B cell (primary cell): ENCODE measurements at regions of chr11 and their contacts with region 1.

Region 1: GRCh38 chr11:124673333-124674167 is at the starts of genes SIAE and SPA17:
- DNase-seq: peak; percentile 96
- ATAC-seq: peak; percentile 93
- H3K4me3 ChIP-seq: peak within 1 kb of the TSS; percentile 46 to 93 (median 75)
- H3K4me3 Mint-ChIP-seq: peak within 1 kb of the TSS; percentile 94
- H3K27ac ChIP-seq: peak within 1 kb of the TSS; percentile 73 to 90
- H3K27ac Mint-ChIP-seq: peak within 1 kb of the TSS; percentile 96
- H3K4me1 ChIP-seq: peaks cover 23 to 32% of the 10 kb centered on the region in 2 donors
- H3K4me1 Mint-ChIP-seq: peaks cover 25% of the 10 kb centered on the region
- H3K27me3 ChIP-seq: no peaks in the 10 kb centered on the region
- H3K27me3 Mint-ChIP-seq: no peaks in the 10 kb centered on the region
- CTCF ChIP-seq: no peak
- total RNA-seq, gene SIAE: 3.6 and 5.1 TPM in 2 replicates
- total RNA-seq, gene SPA17: 0.46 and 0.76 TPM in 2 replicates

Region 2: GRCh38 chr11:123797114-123797513 is 876.4 kb before region 1 on chr11:
- CTCF ChIA-PET with region 1: no interaction called
- POLR2A ChIA-PET with region 1: no interaction called
- intact Hi-C with region 1: no loop called
- DNase-seq: no peak
- ATAC-seq: no peak
- H3K4me3 ChIP-seq: no peak overlapping the region
- H3K4me3 Mint-ChIP-seq: no peak overlapping the region
- H3K27ac ChIP-seq: no peak overlapping the region
- H3K27ac Mint-ChIP-seq: no peak overlapping the region
- H3K4me1 ChIP-seq: no peaks in the 10 kb centered on the region
- H3K4me1 Mint-ChIP-seq: no peaks in the 10 kb centered on the region
- H3K27me3 ChIP-seq: no peaks in the 10 kb centered on the region
- H3K27me3 Mint-ChIP-seq: peaks cover 7% of the 10 kb centered on the region
- CTCF ChIP-seq: no peak

Region 3: DNA sequence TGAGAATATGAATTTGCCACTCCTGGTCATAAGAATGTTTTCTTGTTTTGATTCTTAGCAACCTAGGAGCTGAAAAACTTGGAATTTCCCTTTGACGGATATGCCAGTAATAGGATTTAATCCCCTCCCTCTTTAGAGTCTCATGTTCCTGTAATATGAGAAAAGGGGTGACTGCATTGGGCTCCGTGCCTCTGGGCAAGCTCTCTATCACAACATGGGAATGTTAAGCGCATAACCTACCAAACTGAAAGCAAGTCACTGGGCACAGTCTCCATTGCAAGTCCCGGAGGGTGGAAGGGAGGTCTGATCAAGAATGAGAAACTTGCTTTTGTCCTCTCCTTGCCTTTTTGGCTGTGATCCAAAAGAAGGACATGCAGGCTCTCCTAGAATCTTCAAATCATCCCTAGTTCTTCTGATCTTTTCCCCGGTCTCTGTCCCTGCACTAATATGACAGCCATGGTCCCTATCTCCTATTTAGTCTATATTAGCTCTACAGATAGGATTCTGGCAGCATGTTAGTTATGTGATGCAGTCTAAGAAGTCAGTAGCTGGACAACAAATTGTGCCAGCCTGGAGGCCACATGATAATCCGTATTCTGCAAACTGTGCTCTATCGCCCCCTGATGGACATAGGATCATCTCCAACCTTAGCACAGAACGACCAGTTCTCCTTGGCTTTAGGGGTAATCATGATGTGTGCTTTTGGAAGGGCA is 478.7 kb before region 1 on chr11:
- CTCF ChIA-PET with region 1: no interaction called
- POLR2A ChIA-PET with region 1: no interaction called
- intact Hi-C with region 1: no loop called
- DNase-seq: peak; percentile 51
- ATAC-seq: no peak
- H3K4me3 ChIP-seq: no peak overlapping the region
- H3K4me3 Mint-ChIP-seq: no peak overlapping the region
- H3K27ac ChIP-seq: no peak overlapping the region
- H3K27ac Mint-ChIP-seq: no peak overlapping the region
- H3K4me1 ChIP-seq: peaks cover 0 to 3% of the 10 kb centered on the region in 2 donors
- H3K4me1 Mint-ChIP-seq: peaks cover 6% of the 10 kb centered on the region
- H3K27me3 ChIP-seq: no peaks in the 10 kb centered on the region
- H3K27me3 Mint-ChIP-seq: peaks cover 3% of the 10 kb centered on the region
- CTCF ChIP-seq: peak; percentile 55

Region 4: DNA sequence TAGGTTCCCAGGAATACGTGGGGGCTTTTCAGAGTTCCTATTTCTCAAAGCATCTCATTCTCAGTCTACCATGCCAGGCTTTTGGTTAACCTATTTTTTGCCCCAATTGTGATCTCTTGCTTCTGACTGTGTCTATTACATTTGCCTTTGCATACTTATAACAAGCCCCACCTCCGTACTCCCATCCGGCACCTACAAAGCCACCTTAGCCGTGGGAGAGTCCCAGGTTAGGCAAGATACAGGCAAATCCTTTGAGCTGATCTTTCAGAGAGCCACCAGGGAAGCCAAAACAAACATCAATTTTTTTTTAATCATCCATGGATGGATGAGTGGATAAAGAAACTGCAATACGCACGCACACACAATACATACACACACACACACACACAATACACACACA is 80.9 kb before region 1 on chr11:
- CTCF ChIA-PET with region 1: no interaction called
- POLR2A ChIA-PET with region 1: no interaction called
- intact Hi-C with region 1: no loop called
- DNase-seq: no peak
- ATAC-seq: no peak
- H3K4me3 ChIP-seq: no peak overlapping the region
- H3K4me3 Mint-ChIP-seq: no peak overlapping the region
- H3K27ac ChIP-seq: no peak overlapping the region
- H3K27ac Mint-ChIP-seq: no peak overlapping the region
- H3K4me1 ChIP-seq: no peaks in the 10 kb centered on the region
- H3K4me1 Mint-ChIP-seq: no peaks in the 10 kb centered on the region
- H3K27me3 ChIP-seq: peaks cover 0 to 5% (median 3%) of the 10 kb centered on the region in 4 experiments
- H3K27me3 Mint-ChIP-seq: peaks cover 23% of the 10 kb centered on the region
- CTCF ChIP-seq: no peak

Region 5: DNA sequence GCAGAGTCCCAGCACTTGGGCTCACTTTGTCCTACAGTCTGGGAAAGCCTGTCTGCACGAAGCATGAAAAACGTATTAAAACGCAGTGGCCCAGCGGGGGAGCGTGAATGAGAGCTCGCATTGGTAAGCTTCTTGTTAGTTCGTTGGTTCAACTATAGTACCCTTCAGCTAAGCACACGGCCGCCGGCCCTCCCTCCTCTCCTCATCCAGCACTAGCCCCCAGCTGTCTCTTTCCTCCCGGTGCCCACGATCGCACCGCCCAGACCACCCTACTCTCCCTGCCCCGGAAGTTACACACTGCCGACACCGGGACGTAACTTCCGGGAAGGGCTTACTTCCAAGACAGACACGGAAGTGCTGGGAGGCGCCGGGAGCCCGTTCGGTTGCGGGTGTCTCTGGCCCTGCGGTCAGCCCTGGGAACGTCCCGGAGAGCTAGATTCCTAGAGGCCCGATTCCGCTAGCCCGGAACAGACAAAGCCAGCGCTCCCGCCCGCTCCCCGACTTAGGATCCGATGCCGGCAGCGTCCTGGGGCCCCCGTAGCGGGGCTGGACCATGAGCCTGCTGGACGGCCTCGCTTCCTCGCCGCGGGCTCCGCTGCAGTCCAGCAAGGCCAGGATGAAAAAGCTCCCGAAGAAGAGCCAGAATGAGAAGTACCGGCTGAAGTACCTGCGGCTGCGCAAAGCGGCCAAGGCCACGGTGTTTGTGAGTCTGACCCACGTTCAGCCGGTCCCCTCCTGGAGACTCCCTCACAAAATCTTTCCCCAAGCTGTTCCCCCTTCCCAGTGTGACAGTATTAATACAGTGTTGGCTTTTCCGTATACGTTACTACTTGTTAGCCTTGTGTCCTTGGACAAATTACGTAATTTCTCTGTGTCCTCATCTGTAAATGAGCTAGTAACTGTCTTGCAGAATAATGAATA is 50.8 kb before region 1 on chr11 and contains the start of gene TBRG1:
- CTCF ChIA-PET with region 1: interaction called, 10 read pairs
- POLR2A ChIA-PET with region 1: no interaction called
- intact Hi-C with region 1: loop called (anchors 1 kb)
- DNase-seq: peak; percentile 89
- ATAC-seq: peak; percentile 97
- H3K4me3 ChIP-seq: peak within 1 kb of the TSS; percentile 75 to 98 (median 91)
- H3K4me3 Mint-ChIP-seq: peak within 1 kb of the TSS; percentile 99
- H3K27ac ChIP-seq: peak within 1 kb of the TSS; percentile 71 to 95
- H3K27ac Mint-ChIP-seq: peak within 1 kb of the TSS; percentile 97
- H3K4me1 ChIP-seq: peaks cover 15 to 17% of the 10 kb centered on the region in 2 donors
- H3K4me1 Mint-ChIP-seq: peaks cover 31% of the 10 kb centered on the region
- H3K27me3 ChIP-seq: peaks cover 0 to 13% (median 3%) of the 10 kb centered on the region in 4 experiments
- H3K27me3 Mint-ChIP-seq: peaks cover 24% of the 10 kb centered on the region
- CTCF ChIP-seq: no peak
- total RNA-seq, gene TBRG1: 66.8 and 71.5 TPM in 2 replicates

Region 6: GRCh38 chr11:124658986-124659385 is 14.6 kb before region 1 on chr11:
- CTCF ChIA-PET with region 1: interaction called, 11 read pairs
- POLR2A ChIA-PET with region 1: no interaction called
- intact Hi-C with region 1: no loop called
- DNase-seq: no peak
- ATAC-seq: no peak
- H3K4me3 ChIP-seq: no peak overlapping the region
- H3K4me3 Mint-ChIP-seq: no peak overlapping the region
- H3K27ac ChIP-seq: no peak overlapping the region
- H3K27ac Mint-ChIP-seq: no peak overlapping the region
- H3K4me1 ChIP-seq: no peaks in the 10 kb centered on the region
- H3K4me1 Mint-ChIP-seq: no peaks in the 10 kb centered on the region
- H3K27me3 ChIP-seq: no peaks in the 10 kb centered on the region
- H3K27me3 Mint-ChIP-seq: no peaks in the 10 kb centered on the region
- CTCF ChIP-seq: no peak

Region 7: DNA sequence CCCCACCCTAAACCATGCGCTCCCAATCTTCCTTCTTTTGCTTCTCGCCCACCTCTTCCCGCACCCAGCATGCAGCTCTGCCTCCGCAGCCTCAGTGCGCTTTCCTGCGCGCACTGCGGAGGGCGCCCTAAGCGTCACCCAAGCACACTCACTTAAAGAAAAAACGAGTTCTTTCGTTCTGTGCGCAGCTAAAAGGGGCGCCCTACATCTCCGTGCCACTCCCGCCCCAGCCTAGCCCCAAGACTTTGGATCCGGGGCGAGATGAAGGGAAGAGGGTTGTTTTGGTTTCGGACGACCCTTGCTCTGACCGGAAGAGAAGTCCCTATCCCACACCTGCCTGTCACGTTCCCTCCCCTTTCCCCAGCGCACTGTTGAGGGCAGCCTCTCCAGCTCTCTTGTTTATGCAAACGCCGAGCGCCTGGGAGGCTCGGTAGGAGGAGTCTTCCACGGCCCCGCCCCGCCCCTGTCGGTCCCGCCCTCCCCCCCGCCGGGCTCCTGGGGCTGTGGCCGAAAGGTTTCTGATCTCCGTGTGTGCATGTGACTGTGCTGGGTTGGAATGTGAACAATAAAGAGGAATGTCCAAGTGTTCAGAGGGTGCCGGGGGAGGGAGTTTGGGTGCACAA is 73.2 kb after region 1 on chr11:
- CTCF ChIA-PET with region 1: interaction called, 11 read pairs
- POLR2A ChIA-PET with region 1: interaction called, 6 read pairs
- intact Hi-C with region 1: loop called (anchors 1 kb)
- DNase-seq: peak; percentile 90
- ATAC-seq: peak; percentile 90
- H3K4me3 ChIP-seq: peak overlapping the region; percentile 62 to 97 (median 83)
- H3K4me3 Mint-ChIP-seq: peak overlapping the region; percentile 99
- H3K27ac ChIP-seq: peak overlapping the region; percentile 43 to 59
- H3K27ac Mint-ChIP-seq: peak overlapping the region; percentile 97
- H3K4me1 ChIP-seq: peaks cover 24 to 42% of the 10 kb centered on the region in 2 donors
- H3K4me1 Mint-ChIP-seq: peaks cover 35% of the 10 kb centered on the region
- H3K27me3 ChIP-seq: peaks cover 0 to 3% (median 0%) of the 10 kb centered on the region in 4 experiments
- H3K27me3 Mint-ChIP-seq: no peaks in the 10 kb centered on the region
- CTCF ChIP-seq: peak; percentile 67

Region 8: DNA sequence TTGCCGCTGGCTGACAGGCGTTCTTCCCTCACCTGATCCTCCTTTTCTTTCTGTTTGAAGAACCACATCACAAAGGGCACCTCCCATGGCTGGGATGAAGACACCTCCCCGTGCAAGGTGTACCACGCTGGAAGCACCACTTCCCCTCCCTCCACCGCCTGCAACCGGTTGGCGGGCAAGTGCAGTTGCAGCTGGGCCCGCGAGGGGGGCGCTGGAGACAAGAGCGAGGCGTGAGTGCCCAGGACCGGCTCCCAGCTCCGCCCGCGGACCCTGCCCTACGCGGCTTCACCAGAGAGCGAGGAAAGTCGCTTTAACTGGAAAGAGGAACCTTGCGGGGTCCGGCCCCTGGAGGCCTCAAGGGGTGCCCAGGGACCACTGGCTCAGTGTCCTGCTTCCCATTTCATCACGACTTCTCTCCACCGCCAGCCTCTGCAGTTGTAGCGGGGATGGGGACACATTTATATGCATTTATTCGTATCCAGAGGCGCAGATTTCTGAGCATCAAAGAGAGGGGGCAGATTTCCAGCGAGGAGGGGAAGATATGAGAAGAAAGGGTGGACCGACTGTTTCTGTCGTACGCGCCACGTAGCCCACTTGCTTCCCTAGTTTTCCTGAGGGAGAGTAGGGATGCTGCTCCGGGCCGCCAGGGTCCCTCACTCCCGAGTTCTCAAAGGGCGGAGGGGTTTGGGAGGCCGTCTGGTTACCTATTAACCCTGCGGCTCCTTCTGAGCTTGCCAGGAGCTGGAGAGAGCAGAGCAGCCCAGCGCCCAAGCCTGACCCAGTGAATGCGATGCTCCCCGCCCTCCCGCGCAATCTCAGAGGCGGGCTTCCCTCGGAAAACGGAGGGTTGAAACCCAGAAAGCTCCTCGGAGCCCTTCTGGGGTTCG is 85.0 kb after region 1 on chr11:
- CTCF ChIA-PET with region 1: interaction called, 202 read pairs
- POLR2A ChIA-PET with region 1: interaction called, 4 read pairs
- intact Hi-C with region 1: loop called (anchors 1 kb)
- DNase-seq: peak; percentile 83
- ATAC-seq: peak; percentile 67
- H3K4me3 ChIP-seq: peak overlapping the region in 4 of 5 experiments; percentile 27 to 81 (median 43)
- H3K4me3 Mint-ChIP-seq: peak overlapping the region; percentile 81
- H3K27ac ChIP-seq: peak overlapping the region in 1 of 2 donors; percentile 22
- H3K27ac Mint-ChIP-seq: no peak overlapping the region
- H3K4me1 ChIP-seq: peaks cover 38 to 53% of the 10 kb centered on the region in 2 donors
- H3K4me1 Mint-ChIP-seq: peaks cover 39% of the 10 kb centered on the region
- H3K27me3 ChIP-seq: peaks cover 0 to 22% (median 10%) of the 10 kb centered on the region in 4 experiments
- H3K27me3 Mint-ChIP-seq: peaks cover 11% of the 10 kb centered on the region
- CTCF ChIP-seq: peak; percentile 84

Region 9: DNA sequence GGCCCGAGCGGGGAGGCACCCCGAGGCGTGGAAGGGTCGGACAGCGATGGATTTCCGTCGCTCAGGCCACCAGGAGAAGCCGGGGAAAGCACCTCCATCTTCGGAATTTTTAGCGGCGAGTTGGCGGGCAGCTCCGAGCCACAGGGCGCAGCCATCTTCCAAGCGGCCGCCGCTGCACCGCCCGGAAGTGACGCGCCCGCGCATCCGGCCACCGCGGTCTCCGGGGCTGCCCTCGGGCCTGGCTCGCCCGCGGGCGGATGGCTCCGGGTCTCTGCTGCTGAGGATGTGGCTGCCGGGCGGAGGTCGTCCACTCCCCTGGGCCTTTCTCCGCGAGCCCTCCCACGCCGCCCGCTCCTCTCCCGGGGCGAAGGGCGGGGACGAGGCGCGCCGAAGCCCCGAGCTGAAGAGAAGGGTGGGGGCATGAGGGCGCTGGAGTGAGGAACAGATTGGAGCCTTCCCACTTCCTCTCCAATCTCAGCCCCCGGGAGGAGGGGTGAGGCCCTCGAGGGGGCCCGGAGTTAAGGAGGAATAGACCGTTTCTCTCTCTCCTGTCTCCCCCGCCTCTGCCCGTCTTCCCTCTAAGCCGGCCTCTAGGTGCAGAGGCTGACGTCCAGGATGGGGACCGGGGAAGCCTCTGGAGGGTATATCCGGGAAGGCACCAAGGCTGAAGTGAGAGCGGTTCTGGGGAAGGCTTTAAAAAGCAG is 126.8 kb after region 1 on chr11 and contains the start of gene MSANTD2:
- CTCF ChIA-PET with region 1: interaction called, 177 read pairs
- POLR2A ChIA-PET with region 1: interaction called, 8 read pairs
- intact Hi-C with region 1: loop called (anchors 1 kb)
- DNase-seq: peak; percentile 89
- ATAC-seq: peak; percentile 84
- H3K4me3 ChIP-seq: peak within 1 kb of the TSS; percentile 57 to 95 (median 91)
- H3K4me3 Mint-ChIP-seq: peak within 1 kb of the TSS; percentile 94
- H3K27ac ChIP-seq: peak within 1 kb of the TSS; percentile 96 to 99
- H3K27ac Mint-ChIP-seq: peak within 1 kb of the TSS; percentile 93
- H3K4me1 ChIP-seq: peaks cover 15 to 17% of the 10 kb centered on the region in 2 donors
- H3K4me1 Mint-ChIP-seq: peaks cover 22% of the 10 kb centered on the region
- H3K27me3 ChIP-seq: no peaks in the 10 kb centered on the region
- H3K27me3 Mint-ChIP-seq: no peaks in the 10 kb centered on the region
- CTCF ChIP-seq: peak; percentile 2
- total RNA-seq, gene MSANTD2: 26.8 and 33.4 TPM in 2 replicates

Region 10: DNA sequence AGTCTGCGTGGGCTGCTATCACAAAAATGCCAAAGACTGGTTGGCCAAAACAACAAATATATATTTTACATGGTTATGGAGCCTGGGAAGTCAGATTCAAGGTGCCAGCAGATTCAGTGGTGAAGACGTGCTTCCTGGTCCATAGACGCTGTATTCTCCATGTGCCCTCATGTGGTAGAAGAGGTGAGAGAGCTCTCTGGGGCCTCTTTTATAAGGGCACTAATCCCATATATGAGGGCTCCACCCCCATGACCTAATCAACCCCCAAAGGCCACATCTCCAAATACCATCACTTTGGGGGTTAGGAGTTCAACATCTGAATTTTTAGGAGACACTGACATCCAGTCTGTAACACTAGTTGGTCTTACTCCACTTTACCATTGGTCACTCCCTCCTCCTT is 181.9 kb after region 1 on chr11:
- CTCF ChIA-PET with region 1: no interaction called
- POLR2A ChIA-PET with region 1: no interaction called
- intact Hi-C with region 1: no loop called
- DNase-seq: no peak
- ATAC-seq: no peak
- H3K4me3 ChIP-seq: no peak overlapping the region
- H3K4me3 Mint-ChIP-seq: no peak overlapping the region
- H3K27ac ChIP-seq: no peak overlapping the region
- H3K27ac Mint-ChIP-seq: no peak overlapping the region
- H3K4me1 ChIP-seq: no peaks in the 10 kb centered on the region
- H3K4me1 Mint-ChIP-seq: no peaks in the 10 kb centered on the region
- H3K27me3 ChIP-seq: peaks cover 0 to 21% (median 15%) of the 10 kb centered on the region in 4 experiments
- H3K27me3 Mint-ChIP-seq: peaks cover 18% of the 10 kb centered on the region
- CTCF ChIP-seq: no peak

Region 11: DNA sequence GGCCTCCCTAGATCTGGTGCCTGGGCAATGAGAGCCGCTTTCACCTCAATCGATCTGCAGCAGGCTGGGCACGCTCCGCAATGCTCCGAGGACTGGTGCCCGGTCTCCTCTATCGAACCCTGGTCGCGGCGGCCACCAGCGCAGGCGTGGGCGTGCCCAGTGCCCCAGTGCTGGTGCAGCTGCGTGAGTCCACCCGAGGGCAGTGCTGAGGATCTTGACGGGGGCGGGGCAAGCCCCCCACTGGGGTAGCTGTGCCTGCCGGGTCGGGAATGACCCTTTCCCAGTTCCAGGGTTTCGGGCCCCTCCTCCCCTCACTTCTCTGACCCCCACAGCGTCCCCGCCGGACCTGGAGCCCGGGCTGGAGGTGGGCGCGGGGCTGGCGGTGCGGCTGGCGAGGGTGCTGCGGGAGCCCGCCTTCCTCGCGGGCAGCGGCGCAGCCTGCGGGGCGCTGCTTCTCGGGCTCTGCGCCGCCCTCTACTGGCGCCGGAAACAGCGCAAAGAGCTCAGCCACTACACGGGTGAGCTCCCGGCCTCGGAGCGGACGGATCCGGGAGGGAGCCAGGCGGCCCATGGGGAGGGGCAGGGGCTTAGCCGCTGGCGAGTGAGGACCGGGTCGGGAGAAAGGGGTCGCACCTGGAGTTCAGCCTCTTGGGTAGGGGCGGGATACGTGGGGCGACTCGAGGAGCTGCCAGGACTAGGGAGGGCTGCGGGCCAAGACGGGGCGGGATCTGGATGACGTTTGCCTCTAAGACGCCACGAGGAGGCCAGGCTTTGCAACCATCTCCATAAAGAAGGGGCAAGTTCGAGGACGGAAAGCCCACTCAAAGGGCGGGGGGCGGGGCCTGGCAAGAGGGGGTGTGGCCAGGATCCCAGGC is 202.6 kb after region 1 on chr11:
- CTCF ChIA-PET with region 1: interaction called, 5 read pairs
- POLR2A ChIA-PET with region 1: no interaction called
- intact Hi-C with region 1: loop called (anchors 1 kb)
- DNase-seq: peak; percentile 86
- ATAC-seq: peak; percentile 89
- H3K4me3 ChIP-seq: peak overlapping the region in 4 of 5 experiments; percentile 50 to 77 (median 64)
- H3K4me3 Mint-ChIP-seq: peak overlapping the region; percentile 90
- H3K27ac ChIP-seq: peak overlapping the region in 1 of 2 donors; percentile 36
- H3K27ac Mint-ChIP-seq: peak overlapping the region; percentile 37
- H3K4me1 ChIP-seq: peaks cover 19 to 22% of the 10 kb centered on the region in 2 donors
- H3K4me1 Mint-ChIP-seq: peaks cover 24% of the 10 kb centered on the region
- H3K27me3 ChIP-seq: peaks cover 0 to 68% (median 20%) of the 10 kb centered on the region in 4 experiments
- H3K27me3 Mint-ChIP-seq: peaks cover 80% of the 10 kb centered on the region
- CTCF ChIP-seq: peak; percentile 81